Activated T-helper 2 cell treated with anti-CD3 and anti-CD28 coated beads, Interferon-gamma antibody, Interleukin-2, Interleukin-4, amounts not matched to agents 10 μg/mL and 5 μg/mL and 100 μg/mL, durations not matched to agents 14 hours and 24 hours and 36 hours (primary cell): ENCODE measurements at regions of chr14 and their contacts with region 1.

Region 1: GRCh38 chr14:32202998-32203882 is at the start of gene RNU6-8:
- DNase-seq: peak; percentile 80
- H3K4me3 Mint-ChIP-seq: peak within 1 kb of the TSS; percentile 88
- H3K27ac Mint-ChIP-seq: peak within 1 kb of the TSS; percentile 97
- H3K4me1 Mint-ChIP-seq: peaks cover 39% of the 10 kb centered on the region
- H3K27me3 Mint-ChIP-seq: peaks cover 22% of the 10 kb centered on the region
- total RNA-seq, gene RNU6-8: not detected in 2 replicates

Region 2: GRCh38 chr14:31026395-31027118 is 1176.7 kb before region 1 on chr14:
- intact Hi-C with region 1: loop called (anchors 5 kb)
- DNase-seq: peak; percentile 89
- H3K4me3 Mint-ChIP-seq: peak overlapping the region; percentile 93
- H3K27ac Mint-ChIP-seq: peak overlapping the region; percentile 92
- H3K4me1 Mint-ChIP-seq: peaks cover 51% of the 10 kb centered on the region
- H3K27me3 Mint-ChIP-seq: no peaks in the 10 kb centered on the region

Region 3: DNA sequence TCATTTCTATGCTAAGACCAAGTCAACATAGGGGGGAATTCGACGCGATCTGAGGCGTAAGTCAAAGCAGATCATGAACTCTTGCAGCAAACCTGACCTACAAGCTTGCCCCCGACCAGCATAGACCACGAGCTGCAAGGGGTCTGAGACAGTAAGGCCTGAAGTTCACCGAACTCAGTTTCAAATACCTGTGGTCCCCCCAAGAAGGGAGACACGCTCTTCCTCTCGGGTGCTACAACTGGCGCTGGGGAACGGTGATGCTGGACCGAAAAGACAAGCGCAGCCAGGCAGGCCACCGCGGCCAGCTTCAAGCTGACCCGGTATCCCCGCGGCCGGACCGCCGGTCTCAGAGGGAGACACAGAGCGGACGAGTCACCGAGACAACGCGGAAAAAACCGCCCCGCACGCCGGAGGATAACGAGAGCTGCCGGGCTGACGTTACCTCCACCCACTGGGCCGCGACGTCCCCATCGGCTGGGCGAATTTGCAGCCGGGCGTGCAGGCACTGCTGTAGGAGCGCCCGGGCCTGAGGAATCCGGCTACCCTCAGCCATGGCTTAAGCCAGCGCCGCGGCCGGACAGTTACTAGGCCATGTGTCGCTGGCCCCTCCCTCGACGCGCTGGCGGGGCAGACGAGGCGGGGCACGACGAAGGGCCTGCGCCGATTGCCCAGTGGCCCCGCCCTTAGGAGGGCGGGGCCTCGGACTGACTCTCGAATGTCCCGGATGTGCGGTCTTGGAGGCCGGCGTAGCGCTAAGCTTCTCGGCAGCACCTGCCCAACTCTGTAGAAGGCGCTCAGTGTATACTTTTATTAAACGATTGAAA is 746.2 kb before region 1 on chr14 and contains the start of gene DTD2:
- intact Hi-C with region 1: loop called (anchors 5 kb)
- DNase-seq: peak; percentile 86
- H3K4me3 Mint-ChIP-seq: peak within 1 kb of the TSS; percentile 98
- H3K27ac Mint-ChIP-seq: peak within 1 kb of the TSS; percentile 97
- H3K4me1 Mint-ChIP-seq: peaks cover 24% of the 10 kb centered on the region
- H3K27me3 Mint-ChIP-seq: peaks cover 1% of the 10 kb centered on the region
- total RNA-seq, gene DTD2: 26.7 and 26.9 TPM in 2 replicates

Region 4: DNA sequence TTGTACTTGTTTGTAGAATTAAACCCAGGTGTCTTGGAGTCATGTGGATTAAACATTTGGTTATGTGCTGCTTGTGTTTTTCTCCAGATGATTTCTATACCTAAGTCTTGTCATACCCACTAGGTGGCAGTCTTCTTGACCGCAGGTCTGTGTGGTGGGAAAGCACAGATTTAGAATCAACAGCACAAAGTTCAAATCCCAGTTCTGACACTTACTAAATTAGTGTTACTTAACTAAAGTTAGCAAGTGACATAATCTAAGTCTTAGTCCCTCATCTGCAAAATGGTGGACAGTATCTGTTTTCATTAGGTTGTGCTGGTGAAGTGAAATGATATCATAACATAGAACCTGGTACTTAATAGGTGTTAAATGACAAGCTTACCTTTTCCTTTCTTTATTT is 277.1 kb before region 1 on chr14:
- intact Hi-C with region 1: loop called (anchors 2 kb)
- DNase-seq: no peak
- H3K4me3 Mint-ChIP-seq: no peak overlapping the region
- H3K27ac Mint-ChIP-seq: no peak overlapping the region
- H3K4me1 Mint-ChIP-seq: peaks cover 20% of the 10 kb centered on the region
- H3K27me3 Mint-ChIP-seq: peaks cover 1% of the 10 kb centered on the region

Region 5: DNA sequence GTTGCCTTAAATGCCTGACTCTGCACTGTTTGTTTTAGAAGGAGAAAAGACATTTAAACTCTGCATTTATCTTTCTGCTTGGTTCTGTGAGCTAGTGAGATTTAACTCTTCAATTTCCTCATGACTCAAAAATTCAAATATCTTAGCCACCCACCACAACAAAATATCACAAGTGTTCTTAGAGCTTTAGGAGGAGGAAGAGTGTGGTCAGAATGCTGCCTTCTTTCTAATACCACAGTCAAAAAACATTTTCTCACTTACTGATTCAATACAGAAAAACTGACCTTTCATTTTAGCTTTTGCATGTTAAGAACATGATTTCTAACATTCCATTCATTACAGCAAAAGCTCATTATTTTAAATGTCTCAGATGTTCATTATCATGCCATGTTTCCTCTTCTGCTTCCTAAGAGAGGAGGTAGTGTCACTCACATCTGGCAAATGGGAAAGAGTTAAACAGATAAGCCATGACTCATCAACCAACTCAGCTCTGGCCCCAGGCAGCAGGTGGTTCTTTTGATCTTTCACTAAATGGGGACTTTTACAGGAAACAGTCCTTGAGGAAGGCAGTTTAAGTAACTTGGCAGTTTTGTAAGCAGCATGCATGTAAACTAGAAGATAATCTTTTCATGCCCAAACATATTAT is 56.3 kb after region 1 on chr14:
- intact Hi-C with region 1: loop called (anchors 2 kb)
- DNase-seq: no peak
- H3K4me3 Mint-ChIP-seq: no peak overlapping the region
- H3K27ac Mint-ChIP-seq: peak overlapping the region; percentile 2
- H3K4me1 Mint-ChIP-seq: peaks cover 22% of the 10 kb centered on the region
- H3K27me3 Mint-ChIP-seq: no peaks in the 10 kb centered on the region

Region 6: DNA sequence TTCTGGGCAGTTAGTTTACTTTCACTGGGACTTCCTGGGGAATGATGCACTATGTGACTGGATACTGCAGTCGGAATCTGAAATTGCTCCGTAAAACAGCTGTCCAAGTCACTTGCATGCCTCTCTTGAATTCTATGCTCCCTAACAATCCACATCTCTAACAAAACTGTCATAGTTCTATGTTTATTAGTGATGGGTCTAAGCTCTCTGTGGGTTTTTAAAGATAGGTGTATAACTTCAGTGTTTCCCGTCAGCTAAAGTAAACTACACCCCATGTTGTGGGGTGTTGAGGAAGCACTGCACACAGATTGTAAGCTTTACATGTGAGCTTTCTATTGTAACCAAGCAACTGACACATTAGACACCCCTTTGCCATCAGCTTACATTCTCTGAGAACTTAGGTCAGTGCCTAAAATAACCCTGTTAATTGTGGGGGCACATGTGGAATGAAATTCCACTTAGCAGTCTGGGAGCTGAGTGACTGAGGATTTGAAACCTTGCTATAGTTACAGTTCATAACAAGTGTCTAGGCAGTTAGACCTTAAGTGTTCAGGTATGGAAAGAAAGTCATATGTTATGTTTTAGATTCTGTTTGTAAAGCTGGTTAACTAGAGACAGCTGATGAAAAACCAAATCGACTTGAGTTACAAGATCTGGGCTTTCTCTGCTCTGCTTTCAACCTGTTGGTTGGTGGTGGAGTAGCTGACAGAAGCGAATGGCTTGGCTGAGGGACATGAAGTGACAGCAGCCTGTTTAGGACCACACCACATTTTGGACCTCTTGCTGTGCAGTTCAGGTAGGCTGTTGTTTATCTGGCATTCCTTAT is 291.6 kb after region 1 on chr14:
- intact Hi-C with region 1: no loop called
- DNase-seq: no peak
- H3K4me3 Mint-ChIP-seq: no peak overlapping the region
- H3K27ac Mint-ChIP-seq: no peak overlapping the region
- H3K4me1 Mint-ChIP-seq: no peaks in the 10 kb centered on the region
- H3K27me3 Mint-ChIP-seq: no peaks in the 10 kb centered on the region